ENCODE measurements at regions of chr2 and their contacts with region 1.

Region 1: GRCh38 chr2:96638144-96639121 is at the start of gene KANSL3:
- DNase-seq: peak; percentile 89
- H3K4me3 ChIP-seq: peak within 1 kb of the TSS; percentile 46
- H3K27ac ChIP-seq: peak within 1 kb of the TSS; percentile 82
- H3K4me1 ChIP-seq: peaks cover 9% of the 10 kb centered on the region
- H3K27me3 ChIP-seq: no peaks in the 10 kb centered on the region
- CTCF ChIP-seq: no peak
- total RNA-seq, gene KANSL3: 33.6 to 36.5 TPM

Region 2: GRCh38 chr2:96739633-96740428 is 101.4 kb after region 1 on chr2 and contains the start of gene LMAN2L:
- intact Hi-C with region 1: loop called (anchors 10 kb)
- DNase-seq: peak; percentile 99
- H3K4me3 ChIP-seq: peak within 1 kb of the TSS; percentile 87
- H3K27ac ChIP-seq: peak within 1 kb of the TSS; percentile 64
- H3K4me1 ChIP-seq: peaks cover 13% of the 10 kb centered on the region
- H3K27me3 ChIP-seq: no peaks in the 10 kb centered on the region
- CTCF ChIP-seq: no peak
- total RNA-seq, gene LMAN2L: 13.5 to 24.7 TPM

Region 3: GRCh38 chr2:96760036-96760985 is 121.9 kb after region 1 on chr2 and contains the start of gene CNNM4:
- intact Hi-C with region 1: loop called (anchors 10 kb)
- DNase-seq: peak; percentile 97
- H3K4me3 ChIP-seq: peak within 1 kb of the TSS; percentile 74
- H3K27ac ChIP-seq: peak within 1 kb of the TSS; percentile 80
- H3K4me1 ChIP-seq: peaks cover 8% of the 10 kb centered on the region
- H3K27me3 ChIP-seq: no peaks in the 10 kb centered on the region
- CTCF ChIP-seq: no peak
- total RNA-seq, gene CNNM4: 80.4 to 190 TPM